ENCODE measurements at regions of chr2 and their contacts with region 1.

Region 1: GRCh38 chr2:154616659-154617058 is 81.8 kb upstream of the KCNJ3 start:
- DNase-seq: peak in 1 of 5 donors; percentile 5
- ATAC-seq: no peak
- H3K4me3 ChIP-seq: no peak overlapping the region
- H3K27ac ChIP-seq: no peak overlapping the region
- H3K4me1 ChIP-seq: no peaks in the 10 kb centered on the region
- H3K27me3 ChIP-seq: no peaks in the 10 kb centered on the region
- CTCF ChIP-seq: no peak
- POLR2A ChIP-seq: no peak

Region 2: DNA sequence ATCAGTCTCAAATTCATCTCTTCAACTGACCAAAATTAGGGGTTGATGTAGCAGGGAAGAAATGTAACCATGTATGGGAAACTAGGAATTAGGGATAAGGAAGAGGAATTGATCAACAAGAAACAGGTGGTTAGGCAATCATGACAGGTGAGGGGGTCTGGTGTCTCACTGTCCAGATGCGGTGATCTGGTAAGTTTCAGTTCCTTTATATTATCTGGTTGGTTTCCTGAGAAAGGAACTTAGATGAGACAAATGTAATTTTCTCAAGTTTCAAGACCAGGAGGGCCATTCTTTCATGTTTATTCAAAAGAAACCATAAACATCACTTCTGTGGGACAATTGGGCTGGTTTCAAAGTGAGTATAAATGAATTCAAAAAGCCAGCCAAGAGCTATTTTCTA is 224.4 kb before region 1 on chr2:
- intact Hi-C with region 1: no loop called
- DNase-seq: no peak
- ATAC-seq: no peak
- H3K4me3 ChIP-seq: no peak overlapping the region
- H3K27ac ChIP-seq: no peak overlapping the region
- H3K4me1 ChIP-seq: no peaks in the 10 kb centered on the region
- H3K27me3 ChIP-seq: no peaks in the 10 kb centered on the region
- CTCF ChIP-seq: no peak
- POLR2A ChIP-seq: no peak

Region 3: GRCh38 chr2:154452906-154453493 is 163.7 kb before region 1 on chr2:
- intact Hi-C with region 1: loop called in 7 of 10 experiments (anchors 5 to 10 kb)
- DNase-seq: no peak
- ATAC-seq: peak in 1 of 4 donors; percentile 28
- H3K4me3 ChIP-seq: no peak overlapping the region
- H3K27ac ChIP-seq: no peak overlapping the region
- H3K4me1 ChIP-seq: peaks cover 0 to 13% (median 0%) of the 10 kb centered on the region in 12 donors
- H3K27me3 ChIP-seq: no peaks in the 10 kb centered on the region
- CTCF ChIP-seq: peak; percentile 18 to 64 (median 50)
- POLR2A ChIP-seq: no peak

Region 4: DNA sequence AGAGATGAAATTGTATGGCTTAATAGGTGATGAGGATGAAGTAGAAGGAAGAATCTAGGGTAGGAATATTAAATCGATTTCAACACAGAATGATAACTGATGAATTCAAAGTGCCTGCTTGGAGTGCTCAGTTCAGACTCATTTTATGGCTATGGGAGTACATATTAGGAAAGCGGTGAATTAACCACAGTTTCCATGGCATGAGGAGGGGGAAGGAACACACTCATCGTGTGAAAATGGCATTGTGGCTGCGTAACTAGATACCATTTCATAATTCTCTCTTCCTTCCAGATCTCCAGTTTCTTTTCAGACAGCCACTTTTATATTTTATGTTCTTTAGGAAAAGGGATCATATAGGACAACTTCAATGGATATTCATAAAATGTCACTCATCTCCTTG is 150.4 kb before region 1 on chr2:
- intact Hi-C with region 1: no loop called
- DNase-seq: no peak
- ATAC-seq: no peak
- H3K4me3 ChIP-seq: no peak overlapping the region
- H3K27ac ChIP-seq: no peak overlapping the region
- H3K4me1 ChIP-seq: no peaks in the 10 kb centered on the region
- H3K27me3 ChIP-seq: no peaks in the 10 kb centered on the region
- CTCF ChIP-seq: no peak
- POLR2A ChIP-seq: no peak

Region 5: DNA sequence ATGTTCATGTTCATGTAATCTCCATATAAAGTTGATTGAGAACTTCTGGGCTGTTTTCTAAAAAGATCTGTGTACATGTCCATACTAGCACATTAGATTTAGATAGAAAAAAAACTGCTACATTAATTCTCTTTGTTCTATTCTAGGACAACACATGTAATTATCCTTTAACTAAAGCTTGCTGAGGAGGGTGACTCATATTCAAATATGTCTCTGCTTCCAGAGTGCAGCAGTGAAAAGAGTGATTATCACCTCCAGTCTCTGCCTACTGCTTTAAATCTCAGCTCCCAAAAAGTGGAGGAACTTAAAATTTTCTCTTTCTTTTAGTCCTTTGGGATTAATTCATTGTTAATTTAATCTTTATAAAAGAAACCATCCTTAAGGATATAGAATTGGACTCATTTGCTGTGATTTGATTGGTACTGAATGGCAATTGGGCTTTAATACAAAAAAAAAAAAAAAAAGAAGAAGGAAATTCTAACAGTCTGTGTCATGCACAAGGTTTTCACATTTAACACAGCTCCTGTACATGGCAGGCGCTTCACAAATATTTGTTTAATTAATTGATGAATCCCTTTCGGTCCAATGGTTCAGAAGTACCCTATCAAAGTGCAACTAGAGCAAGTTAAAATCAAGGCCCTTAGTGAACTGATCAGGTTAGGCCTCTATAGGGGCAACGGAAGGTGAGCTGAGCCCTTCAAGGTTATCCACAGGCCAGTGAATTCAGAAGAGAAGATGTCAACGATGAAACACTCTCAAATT is 132.1 kb before region 1 on chr2:
- intact Hi-C with region 1: no loop called
- DNase-seq: no peak
- ATAC-seq: peak in 1 of 4 donors; percentile 42
- H3K4me3 ChIP-seq: no peak overlapping the region
- H3K27ac ChIP-seq: no peak overlapping the region
- H3K4me1 ChIP-seq: peaks cover 0 to 14% (median 4%) of the 10 kb centered on the region in 12 donors
- H3K27me3 ChIP-seq: no peaks in the 10 kb centered on the region
- CTCF ChIP-seq: no peak
- POLR2A ChIP-seq: no peak

Measured in heart left ventricle (tissue), 16 donors.